ENCODE measurements at regions of chr15 and their contacts with region 1.

Region 1: GRCh38 chr15:81312790-81313543 is 11.0 kb downstream of the STARD5 start:
- DNase-seq: peak in 2 of 14 experiments; percentile 59 to 69
- ATAC-seq: no peak
- H3K4me3 ChIP-seq: no peak overlapping the region
- H3K4me3 Mint-ChIP-seq: no peak overlapping the region
- H3K27ac ChIP-seq: peak overlapping the region in 1 of 2 donors; percentile 67
- H3K27ac Mint-ChIP-seq: peak overlapping the region; percentile 92
- H3K4me1 ChIP-seq: peaks cover 68% of the 10 kb centered on the region
- H3K4me1 Mint-ChIP-seq: peaks cover 85% of the 10 kb centered on the region
- H3K27me3 ChIP-seq: no peaks in the 10 kb centered on the region
- H3K27me3 Mint-ChIP-seq: no peaks in the 10 kb centered on the region
- CTCF ChIP-seq: no peak

Region 2: GRCh38 chr15:80875568-80876347 is 437.2 kb before region 1 on chr15:
- CTCF ChIA-PET with region 1: no interaction called
- POLR2A ChIA-PET with region 1: no interaction called
- intact Hi-C with region 1: no loop called
- DNase-seq: no peak
- ATAC-seq: no peak
- H3K4me3 ChIP-seq: no peak overlapping the region
- H3K4me3 Mint-ChIP-seq: no peak overlapping the region
- H3K27ac ChIP-seq: no peak overlapping the region
- H3K27ac Mint-ChIP-seq: no peak overlapping the region
- H3K4me1 ChIP-seq: no peaks in the 10 kb centered on the region
- H3K4me1 Mint-ChIP-seq: no peaks in the 10 kb centered on the region
- H3K27me3 ChIP-seq: no peaks in the 10 kb centered on the region
- H3K27me3 Mint-ChIP-seq: no peaks in the 10 kb centered on the region
- CTCF ChIP-seq: no peak

Region 3: DNA sequence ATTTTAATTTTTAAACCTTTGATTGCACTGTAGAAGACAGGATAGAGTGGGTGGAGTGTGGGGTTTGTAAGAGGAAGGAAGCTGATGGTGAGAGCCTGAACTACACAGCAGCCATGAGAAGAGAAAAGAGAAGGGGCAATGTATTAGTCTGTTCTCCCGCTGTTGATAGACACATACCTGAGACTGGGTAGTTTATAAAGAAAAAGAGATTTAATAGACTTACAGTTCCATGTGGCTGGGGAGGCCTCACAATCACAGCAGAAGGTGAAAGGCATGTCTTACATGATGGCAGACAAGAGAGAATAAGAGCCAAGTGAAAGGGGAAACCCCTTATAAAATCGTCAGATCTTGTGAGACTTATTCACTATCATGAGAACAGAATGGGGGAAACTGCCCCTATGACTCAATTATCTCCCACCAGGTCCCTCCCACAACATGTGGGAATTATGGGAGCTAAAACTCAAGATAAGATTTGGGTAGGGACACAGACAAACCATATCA is 26.3 kb before region 1 on chr15:
- CTCF ChIA-PET with region 1: interaction called, 3 read pairs
- POLR2A ChIA-PET with region 1: interaction called, 472 read pairs
- intact Hi-C with region 1: no loop called
- DNase-seq: peak in 3 of 14 experiments; percentile 65 to 68 (median 68)
- ATAC-seq: peak; percentile 94
- H3K4me3 ChIP-seq: peak overlapping the region; percentile 5
- H3K4me3 Mint-ChIP-seq: peak overlapping the region; percentile 45
- H3K27ac ChIP-seq: peak overlapping the region; percentile 80 to 84
- H3K27ac Mint-ChIP-seq: peak overlapping the region; percentile 92
- H3K4me1 ChIP-seq: peaks cover 71% of the 10 kb centered on the region
- H3K4me1 Mint-ChIP-seq: peaks cover 79% of the 10 kb centered on the region
- H3K27me3 ChIP-seq: no peaks in the 10 kb centered on the region
- H3K27me3 Mint-ChIP-seq: no peaks in the 10 kb centered on the region
- CTCF ChIP-seq: no peak

Region 4: GRCh38 chr15:81296673-81297072 is 16.3 kb before region 1 on chr15:
- CTCF ChIA-PET with region 1: interaction called, 4 read pairs
- POLR2A ChIA-PET with region 1: interaction called, 472 read pairs
- intact Hi-C with region 1: loop called in 1 of 2 experiments (anchors 2 kb)
- DNase-seq: peak; percentile 57 to 93 (median 73)
- ATAC-seq: peak; percentile 45
- H3K4me3 ChIP-seq: peak overlapping the region; percentile 96
- H3K4me3 Mint-ChIP-seq: peak overlapping the region; percentile 99
- H3K27ac ChIP-seq: peak overlapping the region; percentile 94 to 95
- H3K27ac Mint-ChIP-seq: peak overlapping the region; percentile 92
- H3K4me1 ChIP-seq: peaks cover 73% of the 10 kb centered on the region
- H3K4me1 Mint-ChIP-seq: peaks cover 68% of the 10 kb centered on the region
- H3K27me3 ChIP-seq: no peaks in the 10 kb centered on the region
- H3K27me3 Mint-ChIP-seq: no peaks in the 10 kb centered on the region
- CTCF ChIP-seq: no peak

Region 5: DNA sequence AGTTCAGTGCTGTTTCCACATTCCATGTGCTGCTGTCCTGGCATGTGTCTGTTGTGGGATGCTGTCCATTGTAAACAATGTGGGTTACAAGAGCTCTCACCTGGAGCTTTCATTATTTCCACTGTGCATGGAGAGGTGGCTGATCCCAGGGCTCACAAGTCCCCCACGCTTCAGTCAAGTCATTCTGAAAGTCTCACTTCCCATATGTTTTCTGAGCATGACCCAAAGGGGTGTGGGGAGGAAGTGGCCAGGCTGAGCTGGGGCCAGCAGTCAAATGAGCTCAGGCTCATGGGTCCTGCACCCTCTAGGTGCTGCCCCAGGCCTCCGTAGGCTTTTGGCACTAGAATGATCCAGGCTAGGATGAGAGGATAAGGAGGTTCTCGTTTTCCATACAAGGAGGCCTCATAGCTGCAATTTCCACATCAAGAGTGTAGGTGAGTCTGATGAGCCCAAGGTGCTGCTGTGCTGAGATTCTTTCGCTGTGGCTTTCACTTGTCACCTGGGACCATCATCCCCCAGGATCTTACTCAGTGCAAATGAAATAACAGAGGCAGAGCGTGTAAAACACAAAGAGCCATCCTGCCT is 11.1 kb before region 1 on chr15:
- CTCF ChIA-PET with region 1: interaction called, 3 read pairs
- POLR2A ChIA-PET with region 1: interaction called, 472 read pairs
- intact Hi-C with region 1: loop called in 1 of 2 experiments (anchors 2 kb)
- DNase-seq: peak in 4 of 14 experiments; percentile 21 to 61 (median 60)
- ATAC-seq: no peak
- H3K4me3 ChIP-seq: peak overlapping the region; percentile 96
- H3K4me3 Mint-ChIP-seq: peak overlapping the region; percentile 99
- H3K27ac ChIP-seq: peak overlapping the region; percentile 61 to 95
- H3K27ac Mint-ChIP-seq: peak overlapping the region; percentile 92
- H3K4me1 ChIP-seq: peaks cover 71% of the 10 kb centered on the region
- H3K4me1 Mint-ChIP-seq: peaks cover 66% of the 10 kb centered on the region
- H3K27me3 ChIP-seq: no peaks in the 10 kb centered on the region
- H3K27me3 Mint-ChIP-seq: no peaks in the 10 kb centered on the region
- CTCF ChIP-seq: no peak